BJ (cell line): ENCODE measurements at regions of chr22 and their contacts with region 1.

Region 1: GRCh38 chr22:37472418-37473006 is 13.7 kb downstream of the MFNG start:
- DNase-seq: no peak
- H3K4me3 ChIP-seq: no peak overlapping the region
- H3K27me3 ChIP-seq: peaks cover 52% of the 10 kb centered on the region
- CTCF ChIP-seq: peak; percentile 68

Region 2: GRCh38 chr22:37484133-37484824 is 11.8 kb after region 1 on chr22:
- CTCF ChIA-PET with region 1: interaction called, 11 read pairs
- POLR2A ChIA-PET with region 1: no interaction called
- DNase-seq: no peak
- H3K4me3 ChIP-seq: no peak overlapping the region
- H3K27me3 ChIP-seq: no peaks in the 10 kb centered on the region
- CTCF ChIP-seq: no peak

Region 3: DNA sequence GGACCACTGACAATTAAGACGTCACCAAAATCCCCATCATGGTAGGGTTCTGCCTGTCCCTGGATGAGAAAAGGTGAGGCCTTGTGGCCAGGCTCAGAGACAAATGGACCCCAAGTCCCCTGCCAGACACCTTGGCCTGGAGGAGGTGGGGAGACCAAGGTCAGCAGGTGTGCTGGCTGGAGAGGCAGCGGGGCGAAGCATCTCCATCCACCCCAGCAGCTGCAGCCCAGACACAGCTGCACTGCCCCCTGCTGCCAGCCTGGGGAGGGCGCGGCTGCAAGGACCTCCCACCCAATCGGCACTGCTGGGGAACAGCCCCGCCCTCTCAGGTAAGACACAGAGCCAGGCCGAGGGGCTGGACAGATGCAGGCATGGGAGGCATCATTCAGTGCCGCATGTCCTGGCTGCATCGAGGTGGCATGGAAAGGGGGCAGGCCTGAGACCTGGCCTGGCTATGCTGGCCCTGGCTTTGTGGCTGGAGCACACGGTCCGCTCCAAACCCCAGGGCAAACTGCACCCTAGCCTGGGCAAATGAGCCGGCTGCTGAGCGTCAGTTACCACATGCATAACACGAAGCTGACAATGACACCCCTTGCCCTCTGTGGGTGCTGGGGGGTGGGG is 25.9 kb after region 1 on chr22:
- CTCF ChIA-PET with region 1: interaction called, 12 read pairs
- POLR2A ChIA-PET with region 1: no interaction called
- DNase-seq: no peak
- H3K4me3 ChIP-seq: no peak overlapping the region
- H3K27me3 ChIP-seq: no peaks in the 10 kb centered on the region
- CTCF ChIP-seq: 0 out of 2 replicates have a peak, but pooled peaks have one; percentile 15